ENCODE measurements at regions of chr5 and their contacts with region 1.

Region 1: DNA sequence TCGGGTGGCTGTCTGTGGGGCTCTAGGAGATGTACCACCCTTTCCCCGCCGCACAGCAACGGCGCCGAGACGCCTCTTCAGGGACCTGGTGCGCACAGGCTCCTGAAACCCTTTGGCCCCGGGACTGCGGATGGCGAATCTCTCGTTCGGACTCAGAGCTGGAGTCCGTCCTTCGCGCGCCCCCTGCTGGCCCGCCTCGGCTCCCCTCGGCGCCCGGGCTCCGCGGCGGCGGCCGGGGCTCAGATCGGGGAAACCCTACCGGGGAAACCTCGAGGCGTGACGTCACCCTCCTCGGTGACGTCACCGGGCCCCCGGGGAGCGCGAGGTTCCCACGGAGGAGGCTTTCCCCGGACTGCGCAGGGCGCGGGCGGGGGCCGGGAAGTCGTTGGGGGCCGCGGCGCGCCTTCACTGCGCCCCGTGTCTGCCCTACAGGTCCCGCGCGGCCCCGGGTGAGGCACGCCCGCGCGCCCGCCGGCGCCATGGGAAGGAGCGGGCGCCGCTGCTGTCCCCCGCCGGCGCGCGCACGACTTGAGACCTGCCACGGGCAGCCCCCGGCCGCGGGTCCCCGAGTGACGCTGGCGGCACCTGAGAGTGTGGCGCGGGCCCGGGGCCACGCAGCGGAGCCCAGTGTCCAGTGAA is 7.9 kb downstream of the PRR7 start:
- DNase-seq: no peak
- H3K4me3 ChIP-seq: peak overlapping the region; percentile 63 to 81
- H3K27ac ChIP-seq: peak overlapping the region; percentile 74
- H3K4me1 ChIP-seq: peaks cover 46% of the 10 kb centered on the region
- H3K27me3 ChIP-seq: no peaks in the 10 kb centered on the region
- CTCF ChIP-seq: peak; percentile 93 to 95 (median 95)
- POLR2A ChIP-seq: no peak

Region 2: GRCh38 chr5:177311723-177312648 is 142.5 kb before region 1 on chr5 and contains the start of gene MXD3:
- intact Hi-C with region 1: loop called (anchors 10 kb)
- DNase-seq: no peak
- H3K4me3 ChIP-seq: peak within 1 kb of the TSS; percentile 44 to 48
- H3K27ac ChIP-seq: no peak within 1 kb of the TSS
- H3K4me1 ChIP-seq: peaks cover 25% of the 10 kb centered on the region
- H3K27me3 ChIP-seq: no peaks in the 10 kb centered on the region
- CTCF ChIP-seq: no peak
- POLR2A ChIP-seq: no peak
- total RNA-seq, gene MXD3: 5.4 TPM

Region 3: DNA sequence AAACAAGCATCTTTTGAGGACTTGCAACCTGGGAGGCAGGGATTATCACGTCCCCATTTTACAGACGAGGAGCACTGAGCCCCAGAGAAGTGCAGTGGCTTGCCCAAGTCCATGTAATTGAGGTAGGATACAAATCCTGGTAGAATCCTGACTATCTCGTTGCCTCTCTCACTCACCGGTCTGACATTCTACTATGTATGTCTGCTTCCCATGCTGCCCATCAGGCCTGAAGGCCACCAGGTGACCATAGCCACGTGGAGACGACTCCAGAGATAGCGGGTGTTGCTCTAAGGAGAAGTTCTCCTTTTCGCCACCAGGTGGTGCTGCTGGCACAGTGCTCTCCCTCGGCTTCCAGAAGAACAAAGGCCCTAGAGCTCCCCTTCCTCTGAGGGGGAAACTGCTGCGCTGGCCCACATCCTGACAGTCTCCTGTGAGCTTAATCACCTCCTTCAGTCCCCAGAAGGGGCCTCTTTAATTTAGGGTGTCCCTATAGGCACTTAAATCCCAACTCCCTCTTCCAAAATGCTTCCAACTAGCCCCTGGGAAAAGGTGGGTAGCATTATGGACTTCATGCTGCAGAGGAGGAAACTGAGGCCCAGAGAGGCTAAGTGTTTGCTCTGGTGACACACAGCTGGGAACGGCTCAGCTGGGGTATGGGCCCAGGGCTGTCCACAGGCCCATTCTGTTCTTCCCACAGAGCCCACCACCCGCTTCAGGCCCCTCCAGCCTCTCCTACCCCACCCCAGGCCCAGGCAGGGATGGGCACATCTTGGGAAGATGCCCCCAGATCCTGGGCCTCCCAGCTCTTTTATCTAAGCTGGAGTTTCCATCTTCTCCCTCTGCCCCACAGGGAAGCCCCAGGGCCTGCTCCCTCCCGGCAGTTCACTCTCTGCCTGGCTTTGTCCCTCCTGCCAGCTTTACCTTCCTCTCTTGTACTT is 63.9 kb before region 1 on chr5:
- intact Hi-C with region 1: loop called (anchors 2 kb)
- DNase-seq: no peak
- H3K4me3 ChIP-seq: no peak overlapping the region
- H3K27ac ChIP-seq: peak overlapping the region; percentile 37
- H3K4me1 ChIP-seq: peaks cover 37% of the 10 kb centered on the region
- H3K27me3 ChIP-seq: no peaks in the 10 kb centered on the region
- CTCF ChIP-seq: peak; percentile 87 to 96 (median 92)
- POLR2A ChIP-seq: no peak

Region 4: DNA sequence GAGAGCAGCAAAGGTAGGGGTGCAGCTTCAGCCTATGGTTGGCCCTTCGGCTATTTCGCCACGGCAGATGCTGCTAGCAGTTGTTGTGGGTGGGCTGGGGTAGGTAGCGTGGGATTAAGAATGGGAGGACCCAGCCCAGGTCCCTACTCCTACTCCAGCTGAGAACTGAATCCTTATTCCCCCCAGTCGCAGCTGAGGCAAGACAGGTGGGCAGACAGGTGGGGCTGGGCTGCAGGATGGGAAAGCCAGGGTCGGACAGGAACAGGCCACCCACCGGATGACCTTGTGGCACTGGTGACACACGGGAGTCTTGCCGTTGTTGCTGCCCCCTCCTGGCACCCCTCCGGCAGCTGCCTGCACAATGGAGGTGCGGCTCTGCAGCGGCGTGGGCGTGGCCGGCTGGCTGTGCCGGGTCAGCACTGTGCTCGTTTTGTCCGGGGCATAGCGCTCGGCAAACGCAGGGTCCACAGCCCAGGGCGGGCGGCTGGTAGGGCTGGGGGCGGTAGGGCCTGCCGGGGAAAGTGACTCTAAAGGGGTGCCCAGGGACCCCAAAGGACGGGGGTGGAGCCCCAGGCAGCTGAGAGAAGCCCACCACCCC is 34.7 kb after region 1 on chr5:
- intact Hi-C with region 1: no loop called
- DNase-seq: no peak
- H3K4me3 ChIP-seq: no peak overlapping the region
- H3K27ac ChIP-seq: no peak overlapping the region
- H3K4me1 ChIP-seq: peaks cover 21% of the 10 kb centered on the region
- H3K27me3 ChIP-seq: no peaks in the 10 kb centered on the region
- CTCF ChIP-seq: no peak
- POLR2A ChIP-seq: no peak

Measured in vagina (tissue), 2 donors.